ENCODE measurements at regions of chr21 and their contacts with region 1.

Region 1: GRCh38 chr21:34202553-34203372 is 129.4 kb downstream of the MRPS6 start:
- DNase-seq: peak; percentile 84

Region 2: GRCh38 chr21:33931799-33932390 is 270.9 kb before region 1 on chr21:
- intact Hi-C with region 1: loop called in 1 of 2 experiments (anchors 10 kb)
- DNase-seq: no peak

Region 3: GRCh38 chr21:34133802-34134201 is 69.0 kb before region 1 on chr21:
- intact Hi-C with region 1: loop called in 1 of 2 experiments (anchors 2 kb)
- DNase-seq: no peak

Region 4: DNA sequence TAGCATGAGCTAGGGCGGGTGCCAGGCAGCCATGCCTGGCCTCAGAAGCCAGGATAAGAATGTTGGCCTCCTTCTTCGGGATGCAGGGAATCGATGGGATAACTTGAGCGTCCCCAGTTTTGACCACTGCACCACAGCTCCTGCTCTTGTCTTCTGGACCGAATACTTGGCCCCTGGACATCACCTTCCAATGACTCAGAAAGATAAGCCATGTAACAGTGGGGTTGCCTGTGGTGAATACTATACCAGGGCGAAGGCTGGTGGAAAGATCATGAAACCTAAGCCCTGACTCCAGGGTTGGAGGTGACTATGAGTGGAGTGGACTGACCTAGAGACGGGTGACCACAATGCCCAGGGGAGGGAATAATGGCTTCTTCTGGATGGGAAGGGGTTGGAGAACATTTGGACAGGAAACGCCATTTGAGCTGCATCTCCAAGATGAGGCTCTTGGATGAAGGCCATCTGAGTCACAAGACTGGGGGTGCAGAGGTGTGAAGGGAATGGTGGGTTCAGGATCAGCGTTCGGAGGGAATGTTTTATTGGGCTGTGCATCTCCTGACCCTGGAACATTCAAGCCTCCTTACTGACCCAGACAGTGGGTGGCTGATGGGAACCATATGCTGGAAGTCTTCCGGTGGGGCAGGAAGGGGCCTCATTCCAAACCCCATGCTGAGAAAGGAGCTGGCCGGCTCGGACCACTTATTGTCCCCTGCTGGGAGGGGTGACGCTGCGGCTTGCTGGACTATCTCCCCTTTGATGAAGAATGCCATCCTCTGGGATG is 142.5 kb after region 1 on chr21:
- intact Hi-C with region 1: loop called in 1 of 2 experiments (anchors 5 kb)
- DNase-seq: no peak

Measured in posterior vena cava (tissue), 2 donors.